ENCODE measurements at regions of chr5 and their contacts with region 1.

Region 1: GRCh38 chr5:82641331-82642003 is 363.3 kb upstream of the RPS23 start:
- DNase-seq: peak; percentile 14
- H3K4me3 Mint-ChIP-seq: no peak overlapping the region
- H3K27ac Mint-ChIP-seq: no peak overlapping the region
- H3K4me1 Mint-ChIP-seq: peaks cover 19% of the 10 kb centered on the region
- H3K27me3 Mint-ChIP-seq: no peaks in the 10 kb centered on the region

Region 2: DNA sequence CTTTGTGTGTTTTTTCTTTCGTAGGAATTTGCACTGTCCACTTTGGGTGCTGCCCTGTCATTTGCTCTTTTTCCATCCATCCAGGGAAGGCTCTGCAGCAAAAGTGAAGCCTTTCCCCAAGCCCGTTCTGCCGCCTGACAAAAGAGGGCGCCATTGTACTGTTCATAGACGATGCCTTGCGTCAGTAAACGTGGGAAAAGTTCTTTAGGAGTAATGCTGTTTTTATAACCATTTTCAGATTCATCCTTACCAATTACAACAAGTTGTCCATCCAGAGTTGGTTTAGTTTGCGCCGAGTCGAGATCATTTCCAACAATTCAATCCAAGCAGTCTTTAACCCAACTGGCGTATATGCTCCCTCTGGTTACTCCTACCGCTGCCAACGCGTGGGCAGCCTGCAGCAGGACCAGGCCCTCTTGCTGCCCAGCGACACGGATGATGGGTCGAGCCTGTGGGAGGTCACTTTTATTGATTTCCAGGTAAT is 329.1 kb before region 1 on chr5:
- intact Hi-C with region 1: loop called (anchors 2 kb)
- DNase-seq: peak; percentile 25
- H3K4me3 Mint-ChIP-seq: no peak overlapping the region
- H3K27ac Mint-ChIP-seq: no peak overlapping the region
- H3K4me1 Mint-ChIP-seq: peaks cover 24% of the 10 kb centered on the region
- H3K27me3 Mint-ChIP-seq: no peaks in the 10 kb centered on the region

Region 3: GRCh38 chr5:82793808-82794419 is 152.4 kb after region 1 on chr5:
- intact Hi-C with region 1: loop called (anchors 1 kb)
- DNase-seq: no peak
- H3K4me3 Mint-ChIP-seq: no peak overlapping the region
- H3K27ac Mint-ChIP-seq: no peak overlapping the region
- H3K4me1 Mint-ChIP-seq: no peaks in the 10 kb centered on the region
- H3K27me3 Mint-ChIP-seq: peaks cover 6% of the 10 kb centered on the region

Region 4: GRCh38 chr5:83076742-83077661 is 435.5 kb after region 1 on chr5 and contains the starts of genes TMEM167A and XRCC4:
- intact Hi-C with region 1: loop called (anchors 5 kb)
- DNase-seq: peak; percentile 93
- H3K4me3 Mint-ChIP-seq: peak within 1 kb of the TSS; percentile 100
- H3K27ac Mint-ChIP-seq: peak within 1 kb of the TSS; percentile 99
- H3K4me1 Mint-ChIP-seq: peaks cover 43% of the 10 kb centered on the region
- H3K27me3 Mint-ChIP-seq: no peaks in the 10 kb centered on the region
- total RNA-seq, gene TMEM167A: 84.6 and 96.2 TPM in 2 replicates
- total RNA-seq, gene XRCC4: 10.2 and 11.2 TPM in 2 replicates

Region 5: GRCh38 chr5:83473346-83474163 is 832.1 kb after region 1 on chr5:
- intact Hi-C with region 1: loop called (anchors 1 kb)
- DNase-seq: peak; percentile 45
- H3K4me3 Mint-ChIP-seq: peak overlapping the region; percentile 86
- H3K27ac Mint-ChIP-seq: peak overlapping the region; percentile 78
- H3K4me1 Mint-ChIP-seq: peaks cover 33% of the 10 kb centered on the region
- H3K27me3 Mint-ChIP-seq: peaks cover 72% of the 10 kb centered on the region